Activated B cell treated with CpG ODN at 0.5 μM for 24 hours (primary cell): ENCODE measurements at regions of chr5 and their contacts with region 1.

Region 1: GRCh38 chr5:108681079-108681921 is 66.4 kb upstream of the FER start:
- DNase-seq: no peak
- ATAC-seq: peak; percentile 93
- H3K4me3 Mint-ChIP-seq: peak overlapping the region; percentile 29
- H3K27ac Mint-ChIP-seq: no peak overlapping the region
- H3K4me1 Mint-ChIP-seq: peaks cover 13% of the 10 kb centered on the region
- H3K27me3 Mint-ChIP-seq: peaks cover 1% of the 10 kb centered on the region
- CTCF ChIP-seq: no peak

Region 2: GRCh38 chr5:108727651-108728565 is 46.6 kb after region 1 on chr5:
- CTCF ChIA-PET with region 1: no interaction called
- POLR2A ChIA-PET with region 1: no interaction called
- intact Hi-C with region 1: loop called (anchors 1 kb)
- DNase-seq: peak; percentile 62
- ATAC-seq: peak; percentile 84
- H3K4me3 Mint-ChIP-seq: peak overlapping the region; percentile 85
- H3K27ac Mint-ChIP-seq: peak overlapping the region; percentile 96
- H3K4me1 Mint-ChIP-seq: peaks cover 50% of the 10 kb centered on the region
- H3K27me3 Mint-ChIP-seq: no peaks in the 10 kb centered on the region
- CTCF ChIP-seq: no peak

Region 3: DNA sequence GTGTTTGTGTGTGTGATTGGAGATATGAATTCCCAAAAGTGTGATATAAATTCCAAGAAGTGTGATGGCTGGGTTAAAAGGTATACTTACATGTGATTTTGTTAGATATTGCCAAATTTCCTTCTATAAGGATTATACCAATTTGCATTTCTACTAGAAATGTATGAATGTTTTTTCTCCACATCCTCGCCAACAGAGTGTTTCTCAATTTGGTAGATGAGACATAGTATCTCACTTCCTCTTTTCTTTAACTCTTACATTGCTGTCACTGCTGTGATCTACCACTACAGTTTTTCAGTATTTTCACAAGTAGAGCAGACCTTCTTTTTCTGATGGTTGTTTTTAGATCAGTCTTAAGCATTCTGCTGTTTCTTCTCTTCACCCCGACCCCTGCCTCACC is 177.7 kb after region 1 on chr5:
- CTCF ChIA-PET with region 1: no interaction called
- POLR2A ChIA-PET with region 1: no interaction called
- intact Hi-C with region 1: loop called (anchors 2 kb)
- DNase-seq: no peak
- ATAC-seq: peak; percentile 90
- H3K4me3 Mint-ChIP-seq: peak overlapping the region; percentile 25
- H3K27ac Mint-ChIP-seq: no peak overlapping the region
- H3K4me1 Mint-ChIP-seq: peaks cover 13% of the 10 kb centered on the region
- H3K27me3 Mint-ChIP-seq: no peaks in the 10 kb centered on the region
- CTCF ChIP-seq: no peak

Region 4: GRCh38 chr5:109099081-109099480 is 417.8 kb after region 1 on chr5:
- CTCF ChIA-PET with region 1: no interaction called
- POLR2A ChIA-PET with region 1: no interaction called
- intact Hi-C with region 1: loop called (anchors 10 kb)
- DNase-seq: no peak
- ATAC-seq: no peak
- H3K4me3 Mint-ChIP-seq: no peak overlapping the region
- H3K27ac Mint-ChIP-seq: no peak overlapping the region
- H3K4me1 Mint-ChIP-seq: no peaks in the 10 kb centered on the region
- H3K27me3 Mint-ChIP-seq: no peaks in the 10 kb centered on the region
- CTCF ChIP-seq: no peak

Region 5: DNA sequence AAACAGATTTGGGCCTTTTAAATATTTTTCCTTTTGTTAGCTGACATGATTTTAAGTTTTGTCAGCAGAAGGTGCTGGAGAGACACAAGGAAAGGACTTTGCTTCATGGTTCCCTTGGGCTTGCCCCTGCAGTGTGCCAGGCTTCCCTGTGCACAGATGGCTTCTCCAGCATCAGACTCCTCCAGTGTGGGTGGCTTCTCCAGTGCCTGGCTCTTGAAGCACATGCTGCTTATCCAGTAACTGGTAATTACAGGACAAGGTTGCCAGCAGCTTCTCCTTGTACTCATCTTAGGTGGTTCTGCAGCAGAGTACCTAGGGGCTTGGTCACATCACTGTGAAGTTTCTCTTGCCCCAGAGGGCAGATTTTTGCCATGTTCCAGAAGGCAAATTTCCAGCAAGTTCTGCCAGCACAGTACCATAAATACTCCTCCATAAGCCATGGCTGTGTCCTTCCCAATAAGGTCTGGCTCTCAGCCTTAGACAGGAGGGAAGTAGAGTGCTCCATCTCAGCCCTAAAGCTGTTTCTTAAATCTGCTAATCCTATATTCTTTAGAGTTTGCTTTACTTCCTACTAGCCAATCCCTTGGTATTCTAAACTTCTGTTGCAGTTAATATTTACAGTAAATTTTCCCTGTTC is 666.1 kb after region 1 on chr5:
- CTCF ChIA-PET with region 1: no interaction called
- POLR2A ChIA-PET with region 1: no interaction called
- intact Hi-C with region 1: loop called (anchors 5 kb)
- DNase-seq: no peak
- ATAC-seq: no peak
- H3K4me3 Mint-ChIP-seq: no peak overlapping the region
- H3K27ac Mint-ChIP-seq: no peak overlapping the region
- H3K4me1 Mint-ChIP-seq: no peaks in the 10 kb centered on the region
- H3K27me3 Mint-ChIP-seq: no peaks in the 10 kb centered on the region
- CTCF ChIP-seq: no peak

Region 6: GRCh38 chr5:109439590-109439989 is 758.3 kb after region 1 on chr5:
- CTCF ChIA-PET with region 1: interaction called, 5 read pairs
- POLR2A ChIA-PET with region 1: no interaction called
- intact Hi-C with region 1: loop called (anchors 1 kb)
- DNase-seq: no peak
- ATAC-seq: no peak
- H3K4me3 Mint-ChIP-seq: no peak overlapping the region
- H3K27ac Mint-ChIP-seq: no peak overlapping the region
- H3K4me1 Mint-ChIP-seq: no peaks in the 10 kb centered on the region
- H3K27me3 Mint-ChIP-seq: no peaks in the 10 kb centered on the region
- CTCF ChIP-seq: no peak

Region 7: GRCh38 chr5:109479260-109479860 is 798.1 kb after region 1 on chr5:
- CTCF ChIA-PET with region 1: no interaction called
- POLR2A ChIA-PET with region 1: no interaction called
- intact Hi-C with region 1: loop called (anchors 1 kb)
- DNase-seq: no peak
- ATAC-seq: no peak
- H3K4me3 Mint-ChIP-seq: no peak overlapping the region
- H3K27ac Mint-ChIP-seq: no peak overlapping the region
- H3K4me1 Mint-ChIP-seq: peaks cover 7% of the 10 kb centered on the region
- H3K27me3 Mint-ChIP-seq: peaks cover 6% of the 10 kb centered on the region
- CTCF ChIP-seq: no peak

Region 8: GRCh38 chr5:109496109-109496508 is 814.8 kb after region 1 on chr5:
- CTCF ChIA-PET with region 1: no interaction called
- POLR2A ChIA-PET with region 1: no interaction called
- intact Hi-C with region 1: no loop called
- DNase-seq: no peak
- ATAC-seq: no peak
- H3K4me3 Mint-ChIP-seq: no peak overlapping the region
- H3K27ac Mint-ChIP-seq: no peak overlapping the region
- H3K4me1 Mint-ChIP-seq: no peaks in the 10 kb centered on the region
- H3K27me3 Mint-ChIP-seq: peaks cover 10% of the 10 kb centered on the region
- CTCF ChIP-seq: no peak